ENCODE measurements at regions of chr9 and their contacts with region 1.

Region 1: GRCh38 chr9:96491079-96491879 is 41.3 kb downstream of the HABP4 start:
- DNase-seq: peak; percentile 99
- ATAC-seq: peak; percentile 90
- H3K4me3 ChIP-seq: peak overlapping the region; percentile 20 to 60 (median 36); a peak in 5 of 6 replicates
- H3K27ac ChIP-seq: peak overlapping the region; percentile 98
- H3K4me1 ChIP-seq: peaks cover 83% of the 10 kb centered on the region
- H3K27me3 ChIP-seq: no peaks in the 10 kb centered on the region
- CTCF ChIP-seq: no peak
- EP300 ChIP-seq: peak in 1 of 2 experiments; percentile 89
- POLR2A ChIP-seq: peak; percentile 72 to 95
- RAD21 ChIP-seq: peak; percentile 46; the same call in 1 of the 2 replicates

Region 2: DNA sequence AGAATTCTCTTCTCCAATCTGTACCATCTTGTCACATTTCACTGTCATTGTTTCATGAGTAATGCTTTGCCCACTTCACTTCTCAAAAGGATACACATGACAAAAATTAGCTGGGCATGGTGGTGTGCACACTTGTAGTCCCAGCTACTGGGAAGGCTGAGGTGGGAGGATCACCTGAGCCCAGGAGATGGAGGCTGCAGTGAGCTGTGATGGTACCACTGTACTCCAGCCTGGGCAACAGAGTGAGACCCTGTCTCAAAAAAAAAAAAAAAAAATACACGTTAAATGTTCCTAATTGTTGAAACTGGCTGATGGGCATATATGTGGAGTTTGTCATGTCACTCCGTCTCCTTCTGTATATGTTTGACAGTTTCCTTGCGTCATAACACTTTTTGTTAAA is 153.0 kb before region 1 on chr9:
- CTCF ChIA-PET with region 1: no interaction called
- POLR2A ChIA-PET with region 1: interaction called, 3 read pairs
- in situ Hi-C with region 1: no loop called
- intact Hi-C with region 1: loop called (anchors 5 kb)
- DNase-seq: no peak
- ATAC-seq: no peak
- H3K4me3 ChIP-seq: no peak overlapping the region
- H3K27ac ChIP-seq: peak overlapping the region; percentile 97
- H3K4me1 ChIP-seq: peaks cover 83% of the 10 kb centered on the region
- H3K27me3 ChIP-seq: no peaks in the 10 kb centered on the region
- CTCF ChIP-seq: no peak
- EP300 ChIP-seq: no peak
- POLR2A ChIP-seq: no peak
- RAD21 ChIP-seq: no peak

Region 3: GRCh38 chr9:96523374-96523773 is 32.1 kb after region 1 on chr9:
- CTCF ChIA-PET with region 1: no interaction called
- POLR2A ChIA-PET with region 1: interaction called, 11 read pairs
- in situ Hi-C with region 1: no loop called
- intact Hi-C with region 1: no loop called
- DNase-seq: no peak
- ATAC-seq: no peak
- H3K4me3 ChIP-seq: no peak overlapping the region
- H3K27ac ChIP-seq: no peak overlapping the region
- H3K4me1 ChIP-seq: peaks cover 14% of the 10 kb centered on the region
- H3K27me3 ChIP-seq: no peaks in the 10 kb centered on the region
- CTCF ChIP-seq: no peak
- EP300 ChIP-seq: no peak
- POLR2A ChIP-seq: no peak
- RAD21 ChIP-seq: no peak

Region 4: GRCh38 chr9:96581786-96582185 is 90.5 kb after region 1 on chr9:
- CTCF ChIA-PET with region 1: no interaction called
- POLR2A ChIA-PET with region 1: no interaction called
- in situ Hi-C with region 1: no loop called
- intact Hi-C with region 1: no loop called
- DNase-seq: no peak
- ATAC-seq: no peak
- H3K4me3 ChIP-seq: no peak overlapping the region
- H3K27ac ChIP-seq: no peak overlapping the region
- H3K4me1 ChIP-seq: peaks cover 23% of the 10 kb centered on the region
- H3K27me3 ChIP-seq: no peaks in the 10 kb centered on the region
- CTCF ChIP-seq: no peak
- EP300 ChIP-seq: no peak
- POLR2A ChIP-seq: no peak
- RAD21 ChIP-seq: no peak

Region 5: DNA sequence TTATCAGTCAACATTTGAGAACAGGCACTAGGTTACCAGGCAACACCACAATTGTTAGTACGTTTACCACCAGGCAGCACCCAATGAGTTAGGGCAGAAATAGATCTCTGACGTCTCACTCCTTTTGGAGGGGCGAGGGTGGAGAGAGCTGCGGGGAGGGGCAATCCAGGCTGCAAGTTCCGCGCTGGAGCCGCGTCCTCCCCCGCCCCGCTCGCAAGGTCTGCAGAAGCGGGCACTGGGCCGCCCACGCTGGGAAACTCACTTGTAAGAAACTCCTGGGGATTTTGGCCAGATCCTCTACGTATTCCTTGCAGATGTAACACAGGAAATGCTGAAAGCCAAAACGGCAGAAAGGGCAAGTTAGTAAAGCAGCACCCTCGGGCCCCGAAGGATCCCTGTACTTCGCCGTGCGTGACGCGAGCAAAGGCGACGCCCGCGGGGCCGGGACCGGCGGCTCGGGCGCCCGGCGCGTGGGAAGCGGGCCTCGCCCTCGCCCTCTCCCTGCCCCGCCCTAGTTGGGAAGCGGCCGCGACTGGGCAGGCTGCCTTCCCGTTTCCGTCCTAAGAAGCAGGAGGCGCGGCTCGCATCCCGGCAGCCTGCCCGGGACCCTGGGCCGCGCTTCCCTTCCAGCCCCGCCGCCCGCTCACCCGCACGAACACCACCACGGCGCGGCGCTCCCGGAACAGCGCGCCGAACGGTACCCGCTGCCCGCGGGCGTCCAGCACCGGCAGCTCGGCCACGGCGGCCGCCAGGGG is 163.3 kb after region 1 on chr9:
- CTCF ChIA-PET with region 1: no interaction called
- POLR2A ChIA-PET with region 1: interaction called, 6 read pairs
- in situ Hi-C with region 1: no loop called
- intact Hi-C with region 1: loop called (anchors 5 kb)
- DNase-seq: peak; percentile 41
- ATAC-seq: peak; percentile 73
- H3K4me3 ChIP-seq: peak overlapping the region; percentile 81 to 86 (median 81)
- H3K27ac ChIP-seq: peak overlapping the region; percentile 86
- H3K4me1 ChIP-seq: peaks cover 32% of the 10 kb centered on the region
- H3K27me3 ChIP-seq: no peaks in the 10 kb centered on the region; a peak in 1 of 5 replicates
- CTCF ChIP-seq: peak; percentile 40
- EP300 ChIP-seq: no peak
- POLR2A ChIP-seq: peak in 1 of 2 experiments; percentile 28; a peak in 1 of 4 replicates
- RAD21 ChIP-seq: no peak

Measured in HepG2 (cell line).